ENCODE measurements at regions of chr10 and their contacts with region 1.

Region 1: GRCh38 chr10:68348265-68348741 is 15.6 kb upstream of the PBLD start:
- DNase-seq: peak; percentile 57
- ATAC-seq: peak; percentile 89
- H3K4me3 Mint-ChIP-seq: no peak overlapping the region
- H3K27ac Mint-ChIP-seq: peak overlapping the region; percentile 95
- H3K4me1 Mint-ChIP-seq: no peaks in the 10 kb centered on the region
- H3K27me3 Mint-ChIP-seq: no peaks in the 10 kb centered on the region
- CTCF ChIP-seq: peak; percentile 88

Region 2: DNA sequence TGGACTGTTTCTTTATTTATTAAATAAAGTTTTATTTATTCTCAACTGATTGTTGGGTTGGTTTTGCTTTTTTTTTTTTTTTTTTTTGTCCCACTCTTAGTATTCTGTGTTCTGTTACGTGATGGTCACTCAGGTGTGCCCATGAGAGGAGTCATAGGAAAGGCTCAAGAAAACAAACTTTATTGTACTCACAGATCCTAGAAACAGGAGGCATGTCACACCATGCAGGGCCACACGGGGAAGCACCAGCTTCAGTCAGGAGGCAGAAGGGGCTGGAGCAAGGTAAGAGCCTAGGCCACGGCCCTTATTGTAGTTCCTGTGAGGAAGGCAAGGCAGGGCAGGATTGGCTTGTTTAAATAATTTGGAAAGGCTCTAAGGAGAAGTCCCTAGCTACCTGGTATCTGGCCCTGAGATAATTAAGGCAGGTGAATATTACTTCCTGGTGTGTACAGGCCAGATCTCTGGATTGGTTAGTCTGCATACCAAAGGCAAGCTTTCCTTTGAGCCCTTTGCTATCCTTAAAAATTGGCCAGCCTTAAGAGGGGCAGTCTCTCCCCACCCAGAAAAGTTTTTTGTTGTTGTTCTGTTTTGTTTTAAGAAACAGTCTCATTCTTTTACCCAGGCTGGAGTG is 124.7 kb before region 1 on chr10:
- CTCF ChIA-PET with region 1: interaction called, 11 read pairs
- POLR2A ChIA-PET with region 1: no interaction called
- DNase-seq: peak; percentile 58
- ATAC-seq: peak; percentile 100
- H3K4me3 Mint-ChIP-seq: no peak overlapping the region
- H3K27ac Mint-ChIP-seq: no peak overlapping the region
- H3K4me1 Mint-ChIP-seq: no peaks in the 10 kb centered on the region
- H3K27me3 Mint-ChIP-seq: peaks cover 10% of the 10 kb centered on the region
- CTCF ChIP-seq: no peak

Region 3: DNA sequence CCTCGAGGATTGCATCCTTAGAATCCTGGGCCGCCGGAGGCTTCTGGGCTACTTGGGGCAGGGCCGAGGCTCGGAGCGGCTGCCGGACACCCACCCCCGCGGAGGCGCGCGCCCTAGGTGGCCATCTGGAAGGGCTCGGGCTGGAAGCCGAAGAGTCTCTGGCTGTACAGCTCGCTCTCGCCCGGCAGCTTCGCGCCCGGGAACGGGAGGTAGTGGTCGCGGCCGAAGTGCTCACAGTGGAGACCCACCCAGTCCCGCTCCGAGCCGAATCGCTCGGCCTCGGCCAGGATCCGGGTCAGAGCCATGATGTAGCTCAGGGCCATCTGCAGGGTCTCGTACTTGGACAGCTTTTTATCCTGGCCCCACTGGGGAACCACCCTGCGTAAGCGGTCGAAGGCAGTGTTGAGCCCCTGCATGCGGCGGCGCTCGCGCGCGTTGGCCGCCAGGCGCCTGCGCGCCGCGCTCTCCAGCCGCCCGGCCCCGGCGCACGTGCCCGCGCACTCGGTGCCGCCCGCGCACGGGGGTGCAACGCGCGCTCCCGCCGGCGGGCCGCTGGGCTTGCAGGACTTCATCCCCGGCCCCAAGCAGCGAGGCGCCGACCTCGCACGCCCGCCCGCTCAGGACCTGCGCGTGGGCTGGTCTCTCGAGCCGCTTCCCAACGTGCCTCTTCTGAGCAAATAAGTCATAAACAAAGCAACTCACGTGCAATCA is 117.0 kb before region 1 on chr10:
- CTCF ChIA-PET with region 1: interaction called, 11 read pairs
- POLR2A ChIA-PET with region 1: no interaction called
- DNase-seq: peak; percentile 76
- ATAC-seq: peak; percentile 92
- H3K4me3 Mint-ChIP-seq: peak overlapping the region; percentile 77
- H3K27ac Mint-ChIP-seq: no peak overlapping the region; the same call in 1 of the 2 replicates
- H3K4me1 Mint-ChIP-seq: peaks cover 11% of the 10 kb centered on the region
- H3K27me3 Mint-ChIP-seq: peaks cover 66% of the 10 kb centered on the region
- CTCF ChIP-seq: no peak

Region 4: GRCh38 chr10:68331455-68332258 is 16.6 kb before region 1 on chr10 and contains the start of gene HNRNPH3:
- CTCF ChIA-PET with region 1: interaction called, 16 read pairs
- POLR2A ChIA-PET with region 1: interaction called, 11 read pairs
- DNase-seq: peak; percentile 99
- ATAC-seq: peak; percentile 89
- H3K4me3 Mint-ChIP-seq: peak within 1 kb of the TSS; percentile 99
- H3K27ac Mint-ChIP-seq: peak within 1 kb of the TSS; percentile 99
- H3K4me1 Mint-ChIP-seq: peaks cover 43% of the 10 kb centered on the region
- H3K27me3 Mint-ChIP-seq: no peaks in the 10 kb centered on the region; the same call in 1 of the 2 replicates
- CTCF ChIP-seq: no peak
- total RNA-seq, gene HNRNPH3: 220 to 226 TPM (median 223 TPM) in 3 replicates

Region 5: GRCh38 chr10:68362590-68362989 is 14.3 kb after region 1 on chr10:
- CTCF ChIA-PET with region 1: interaction called, 12 read pairs
- POLR2A ChIA-PET with region 1: no interaction called
- DNase-seq: no peak
- ATAC-seq: no peak
- H3K4me3 Mint-ChIP-seq: no peak overlapping the region
- H3K27ac Mint-ChIP-seq: no peak overlapping the region
- H3K4me1 Mint-ChIP-seq: no peaks in the 10 kb centered on the region
- H3K27me3 Mint-ChIP-seq: no peaks in the 10 kb centered on the region
- CTCF ChIP-seq: no peak

Region 6: DNA sequence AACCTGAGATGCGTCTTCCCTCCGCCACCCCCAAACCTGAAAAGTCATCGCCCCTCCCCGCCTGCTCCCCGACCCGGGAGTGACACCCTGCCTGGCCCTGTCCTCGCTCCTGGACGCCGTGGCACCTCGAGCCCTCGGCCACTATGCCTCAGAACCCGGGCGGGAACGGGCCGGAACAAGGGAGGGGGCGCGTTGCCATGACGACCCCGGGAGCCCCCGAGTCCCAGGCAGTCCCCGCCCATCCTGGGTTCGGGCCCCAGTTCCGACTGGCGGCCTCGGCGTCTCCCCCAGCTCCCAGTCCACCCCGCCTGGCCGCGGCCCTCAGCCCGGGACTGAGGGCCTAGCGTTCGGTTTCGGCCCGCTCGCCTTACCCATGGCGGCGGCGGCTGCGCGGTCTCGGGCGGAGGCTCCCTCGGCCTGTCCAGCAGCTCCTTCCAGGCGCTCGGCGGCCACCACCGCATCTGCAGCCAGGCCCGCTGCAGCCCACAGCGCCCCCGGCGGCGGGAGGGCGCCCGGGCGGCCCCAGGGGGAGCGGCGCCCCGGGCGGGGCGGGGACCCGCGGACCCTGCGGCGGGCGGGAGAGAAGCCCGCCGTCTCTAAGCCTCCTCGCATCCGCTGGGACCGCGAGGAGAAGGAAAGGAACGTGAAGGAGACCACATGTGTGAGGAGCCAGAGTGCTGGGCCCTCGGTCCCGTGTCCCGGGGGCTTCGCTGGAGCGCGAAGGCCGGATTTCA is 58.7 kb after region 1 on chr10 and contains the start of gene RUFY2:
- CTCF ChIA-PET with region 1: interaction called, 13 read pairs
- POLR2A ChIA-PET with region 1: no interaction called
- DNase-seq: peak; percentile 83
- ATAC-seq: peak; percentile 89
- H3K4me3 Mint-ChIP-seq: peak within 1 kb of the TSS; percentile 70
- H3K27ac Mint-ChIP-seq: peak within 1 kb of the TSS; percentile 95
- H3K4me1 Mint-ChIP-seq: peaks cover 18% of the 10 kb centered on the region
- H3K27me3 Mint-ChIP-seq: no peaks in the 10 kb centered on the region; the same call in 1 of the 2 replicates
- CTCF ChIP-seq: peak; percentile 57
- total RNA-seq, gene RUFY2: 10.0 to 10.7 TPM (median 10.3 TPM) in 3 replicates

Region 7: GRCh38 chr10:68423522-68423921 is 75.2 kb after region 1 on chr10:
- CTCF ChIA-PET with region 1: no interaction called
- POLR2A ChIA-PET with region 1: no interaction called
- DNase-seq: no peak
- ATAC-seq: no peak
- H3K4me3 Mint-ChIP-seq: no peak overlapping the region
- H3K27ac Mint-ChIP-seq: no peak overlapping the region
- H3K4me1 Mint-ChIP-seq: no peaks in the 10 kb centered on the region
- H3K27me3 Mint-ChIP-seq: no peaks in the 10 kb centered on the region
- CTCF ChIP-seq: no peak

Region 8: DNA sequence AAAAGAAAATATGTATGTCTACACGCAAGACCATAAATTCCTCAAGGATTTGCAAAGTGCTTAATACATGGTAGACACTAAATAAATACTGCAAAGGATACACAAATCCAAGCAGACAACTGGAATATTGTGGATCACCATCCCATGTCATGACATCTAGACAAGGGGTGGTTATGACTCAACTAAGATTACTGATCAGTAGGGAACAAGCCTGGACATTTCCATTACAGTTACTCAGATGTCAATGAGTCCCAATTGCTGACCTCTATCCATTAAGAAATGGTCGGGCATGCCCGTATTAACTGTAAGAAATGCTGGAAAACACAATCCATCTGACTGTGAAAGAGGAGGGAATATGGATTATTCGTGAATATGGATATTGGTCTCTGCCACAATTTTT is 86.4 kb after region 1 on chr10:
- CTCF ChIA-PET with region 1: no interaction called
- POLR2A ChIA-PET with region 1: no interaction called
- DNase-seq: no peak
- ATAC-seq: no peak
- H3K4me3 Mint-ChIP-seq: no peak overlapping the region
- H3K27ac Mint-ChIP-seq: peak overlapping the region; percentile 80; the same call in 1 of the 2 replicates
- H3K4me1 Mint-ChIP-seq: no peaks in the 10 kb centered on the region
- H3K27me3 Mint-ChIP-seq: no peaks in the 10 kb centered on the region
- CTCF ChIP-seq: no peak

Region 9: GRCh38 chr10:68666280-68666760 is 318.0 kb after region 1 on chr10:
- CTCF ChIA-PET with region 1: no interaction called
- POLR2A ChIA-PET with region 1: no interaction called
- DNase-seq: no peak
- ATAC-seq: no peak
- H3K4me3 Mint-ChIP-seq: no peak overlapping the region
- H3K27ac Mint-ChIP-seq: no peak overlapping the region
- H3K4me1 Mint-ChIP-seq: no peaks in the 10 kb centered on the region
- H3K27me3 Mint-ChIP-seq: no peaks in the 10 kb centered on the region
- CTCF ChIP-seq: no peak